K562 (cell line): ENCODE measurements at regions of chr1 and their contacts with region 1.

Region 1: DNA sequence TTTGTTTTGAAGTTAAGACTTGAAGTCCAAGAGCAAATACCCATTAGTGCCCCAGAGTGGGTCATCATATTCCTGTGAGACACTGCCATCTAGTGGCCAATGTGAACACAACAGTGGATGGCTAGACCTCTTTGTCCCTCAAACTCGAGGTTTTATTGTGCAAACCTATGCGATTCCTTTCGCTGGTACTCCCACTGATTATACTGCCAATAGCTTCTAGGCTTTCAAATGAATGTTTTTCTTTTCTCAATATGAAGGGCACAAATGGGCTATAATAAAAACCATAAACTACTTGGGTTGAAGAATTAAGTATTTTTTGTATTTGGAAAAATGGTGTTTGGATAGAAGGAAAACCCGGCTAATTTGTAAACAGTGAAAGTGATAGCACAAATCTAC is 100.4 kb upstream of the ZNF281 start:
- DNase-seq: peak; percentile 84 to 88 (median 87)
- ATAC-seq: peak; percentile 98
- H3K4me3 ChIP-seq: no peak overlapping the region
- H3K27ac ChIP-seq: no peak overlapping the region
- H3K4me1 ChIP-seq: 0 out of 5 replicates have a peak, but pooled peaks cover 0 to 2% of the 10 kb centered on the region in 2 experiments
- H3K27me3 ChIP-seq: peaks cover 13 to 18% of the 10 kb centered on the region in 2 experiments
- CTCF ChIP-seq: peak; percentile 85 to 95 (median 91)
- EP300 ChIP-seq: no peak
- POLR2A ChIP-seq: no peak
- RAD21 ChIP-seq: peak; percentile 94 to 95

Region 2: GRCh38 chr1:198763298-198763714 is 1746.9 kb before region 1 on chr1:
- CTCF ChIA-PET with region 1: no interaction called
- POLR2A ChIA-PET with region 1: no interaction called
- in situ Hi-C with region 1: loop called (anchors 25 kb)
- intact Hi-C with region 1: loop called (anchors 10 kb)
- DNase-seq: no peak
- ATAC-seq: no peak
- H3K4me3 ChIP-seq: no peak overlapping the region
- H3K27ac ChIP-seq: no peak overlapping the region
- H3K4me1 ChIP-seq: no peaks in the 10 kb centered on the region
- H3K27me3 ChIP-seq: no peaks in the 10 kb centered on the region
- CTCF ChIP-seq: no peak
- EP300 ChIP-seq: no peak
- POLR2A ChIP-seq: no peak
- RAD21 ChIP-seq: no peak

Region 3: GRCh38 chr1:198771563-198772153 is 1738.6 kb before region 1 on chr1:
- CTCF ChIA-PET with region 1: no interaction called
- POLR2A ChIA-PET with region 1: no interaction called
- in situ Hi-C with region 1: loop called (anchors 25 kb)
- intact Hi-C with region 1: loop called (anchors 10 kb)
- DNase-seq: peak in 3 of 4 experiments; percentile 16 to 21 (median 20)
- ATAC-seq: peak; percentile 68; the same call in 2 of the 3 replicates
- H3K4me3 ChIP-seq: no peak overlapping the region
- H3K27ac ChIP-seq: no peak overlapping the region
- H3K4me1 ChIP-seq: no peaks in the 10 kb centered on the region
- H3K27me3 ChIP-seq: no peaks in the 10 kb centered on the region
- CTCF ChIP-seq: peak in 2 of 3 experiments; percentile 22 to 36; a peak in 2 of 6 replicates
- EP300 ChIP-seq: no peak
- POLR2A ChIP-seq: no peak
- RAD21 ChIP-seq: peak; percentile 33 to 69; a peak in 3 of 4 replicates

Region 4: GRCh38 chr1:199684686-199685273 is 825.4 kb before region 1 on chr1:
- CTCF ChIA-PET with region 1: interaction called, 3 read pairs
- POLR2A ChIA-PET with region 1: no interaction called
- in situ Hi-C with region 1: no loop called
- intact Hi-C with region 1: loop called (anchors 1 kb)
- DNase-seq: peak; percentile 43 to 53 (median 44)
- ATAC-seq: peak; percentile 92
- H3K4me3 ChIP-seq: no peak overlapping the region
- H3K27ac ChIP-seq: no peak overlapping the region
- H3K4me1 ChIP-seq: no peaks in the 10 kb centered on the region
- H3K27me3 ChIP-seq: no peaks in the 10 kb centered on the region
- CTCF ChIP-seq: peak; percentile 55 to 79 (median 71)
- EP300 ChIP-seq: no peak
- POLR2A ChIP-seq: no peak
- RAD21 ChIP-seq: peak; percentile 90 to 91

Region 5: DNA sequence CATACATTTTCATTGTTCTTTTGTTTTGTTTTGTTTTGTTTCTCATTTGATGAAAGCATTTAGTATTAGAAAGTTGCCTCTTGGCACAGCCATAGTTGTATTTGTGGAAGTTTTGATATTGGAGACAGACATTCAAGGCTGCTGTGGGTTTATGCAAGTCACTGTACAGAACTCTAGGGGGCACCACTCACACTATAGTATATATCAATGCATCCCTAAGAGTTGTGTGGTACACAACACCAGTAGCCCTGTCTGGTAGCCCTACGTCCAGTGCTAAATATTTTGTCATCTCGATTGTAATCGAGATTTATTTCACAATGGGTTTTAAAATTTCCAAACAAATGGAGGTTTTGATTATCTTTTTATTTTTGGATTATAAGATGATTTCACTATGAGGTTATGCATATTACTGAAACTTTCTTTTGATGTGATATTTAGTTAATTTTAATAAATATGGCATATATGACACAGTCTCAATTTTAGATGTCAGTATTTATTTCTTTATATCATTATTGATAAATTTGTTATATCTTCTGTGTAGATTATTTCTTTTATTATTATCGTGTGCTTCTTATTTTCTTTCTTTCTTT is 370.5 kb before region 1 on chr1:
- CTCF ChIA-PET with region 1: no interaction called
- POLR2A ChIA-PET with region 1: no interaction called
- in situ Hi-C with region 1: no loop called
- intact Hi-C with region 1: loop called (anchors 10 kb)
- DNase-seq: peak; percentile 51 to 78 (median 62)
- ATAC-seq: peak; percentile 99
- H3K4me3 ChIP-seq: no peak overlapping the region
- H3K27ac ChIP-seq: no peak overlapping the region
- H3K4me1 ChIP-seq: no peaks in the 10 kb centered on the region
- H3K27me3 ChIP-seq: peaks cover 0 to 4% of the 10 kb centered on the region in 2 experiments; a peak in 3 of 5 replicates
- CTCF ChIP-seq: peak; percentile 71 to 83 (median 75)
- EP300 ChIP-seq: no peak
- POLR2A ChIP-seq: no peak
- RAD21 ChIP-seq: peak; percentile 82 to 93

Region 6: GRCh38 chr1:200279810-200280411 is 230.3 kb before region 1 on chr1:
- CTCF ChIA-PET with region 1: no interaction called
- POLR2A ChIA-PET with region 1: no interaction called
- in situ Hi-C with region 1: no loop called
- intact Hi-C with region 1: loop called (anchors 5 kb)
- DNase-seq: peak; percentile 56 to 69 (median 64)
- ATAC-seq: peak; percentile 88
- H3K4me3 ChIP-seq: no peak overlapping the region
- H3K27ac ChIP-seq: no peak overlapping the region
- H3K4me1 ChIP-seq: peaks cover 0 to 11% of the 10 kb centered on the region in 2 experiments; a peak in 2 of 5 replicates
- H3K27me3 ChIP-seq: peaks cover 0 to 9% of the 10 kb centered on the region in 2 experiments; a peak in 1 of 5 replicates
- CTCF ChIP-seq: peak; percentile 76 to 90 (median 77)
- EP300 ChIP-seq: no peak
- POLR2A ChIP-seq: no peak
- RAD21 ChIP-seq: peak; percentile 46 to 76